ENCODE measurements at regions of chr17 and their contacts with region 1.

Region 1: DNA sequence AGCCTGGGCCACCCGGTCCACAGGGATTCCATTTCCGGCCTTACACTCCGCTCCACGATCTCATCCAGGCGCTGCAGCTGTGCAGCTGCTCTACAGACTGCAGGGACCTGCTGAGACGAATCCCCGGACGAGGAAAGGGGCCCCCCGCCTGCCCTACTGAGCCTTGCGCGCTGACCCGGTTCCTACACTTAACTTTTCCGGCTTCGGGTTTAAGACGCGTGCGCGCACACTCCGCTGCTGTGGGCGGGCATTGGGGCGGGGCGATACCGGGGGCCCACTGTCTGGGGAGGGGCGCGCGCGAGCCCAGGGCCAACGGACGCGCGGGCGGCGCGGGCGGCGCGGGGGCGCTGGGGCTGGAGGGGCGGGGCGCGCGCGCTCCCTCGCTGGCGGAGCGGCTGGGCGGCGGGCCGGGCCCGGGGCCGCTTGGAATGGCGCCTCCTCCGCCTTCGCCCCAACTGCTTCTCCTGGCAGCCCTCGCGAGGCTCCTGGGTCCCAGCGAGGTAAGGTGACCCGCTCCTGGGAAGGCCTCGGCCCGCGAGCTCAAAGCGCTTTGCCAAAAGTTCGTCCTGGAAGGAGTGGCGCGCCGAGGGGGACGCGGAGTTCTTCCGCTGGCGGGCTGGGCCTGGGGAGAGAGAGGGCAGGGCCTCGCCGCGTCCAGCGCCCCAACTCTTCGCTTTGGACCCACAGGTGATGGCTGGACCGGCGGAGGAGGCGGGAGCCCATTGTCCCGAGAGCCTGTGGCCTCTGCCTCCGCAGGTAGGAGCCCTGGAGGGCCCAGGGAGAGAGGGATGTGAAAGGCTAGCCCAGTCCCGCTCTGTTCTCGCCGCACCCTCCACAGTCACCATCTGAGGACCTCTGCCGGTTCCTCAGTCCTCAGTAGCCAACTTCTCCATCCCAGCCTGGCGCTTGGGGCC is at the start of gene TP53I13:
- DNase-seq: peak; percentile 94
- ATAC-seq: peak; percentile 71
- total RNA-seq, gene TP53I13: 38.8 TPM

Region 2: DNA sequence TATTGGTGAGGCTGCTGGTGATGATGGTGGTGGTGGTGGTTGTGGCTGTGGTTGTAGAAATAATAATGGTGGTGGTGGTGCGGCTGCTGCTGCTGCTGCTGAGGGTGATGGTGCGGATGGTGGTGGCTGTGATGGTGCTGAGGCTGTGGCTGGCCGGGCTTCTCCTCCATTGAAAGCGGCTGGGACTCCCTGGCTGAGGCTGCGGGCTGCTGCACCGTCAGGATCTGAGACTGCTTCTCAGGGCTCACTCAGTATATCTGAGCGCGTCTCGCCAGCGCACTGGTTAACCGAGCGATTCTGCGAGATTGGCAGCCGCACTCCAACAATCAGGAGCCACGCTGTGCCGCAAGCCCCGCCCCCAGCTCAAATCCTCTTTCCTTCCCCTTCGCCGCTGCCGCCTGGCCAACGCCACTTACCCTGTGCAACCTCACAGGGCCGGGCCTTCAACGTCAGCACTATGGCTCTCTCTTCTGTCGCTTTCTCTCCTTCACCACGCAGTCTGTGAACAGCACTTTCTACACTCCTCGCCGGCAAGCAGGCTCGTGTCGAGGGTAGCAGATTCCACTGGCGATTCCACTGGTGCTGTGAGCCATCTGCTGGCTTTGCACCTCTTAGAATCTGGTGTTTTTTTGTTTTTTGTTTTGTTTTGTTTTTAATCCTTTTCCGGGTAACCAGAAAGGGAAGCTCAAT is 274.6 kb before region 1 on chr17 and contains the start of gene NUFIP2:
- intact Hi-C with region 1: loop called (anchors 10 kb)
- DNase-seq: peak; percentile 100
- ATAC-seq: peak; percentile 97
- total RNA-seq, gene NUFIP2: 42.3 TPM